ENCODE measurements at regions of chrX and their contacts with region 1.

Region 1: DNA sequence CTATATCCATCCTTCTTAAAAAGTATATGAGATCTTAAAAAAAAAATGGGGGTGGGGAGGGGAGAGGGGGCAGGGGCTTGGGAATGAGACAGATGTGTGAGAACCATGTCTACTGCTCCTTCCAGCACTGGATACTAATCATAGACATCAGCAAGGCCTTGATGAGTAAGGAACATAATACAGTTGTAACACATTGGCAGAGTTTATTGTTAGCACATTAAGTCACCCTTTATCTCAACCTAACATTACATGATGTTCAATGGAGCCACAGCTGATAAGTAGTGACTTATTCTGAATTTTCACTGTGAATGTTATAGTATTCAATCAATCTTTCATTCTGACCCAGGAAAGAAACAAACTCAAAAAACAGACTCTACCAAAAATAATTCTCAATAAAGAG is 47.3 kb upstream of the KCNE5 start:
- DNase-seq: no peak
- ATAC-seq: no peak
- H3K4me3 ChIP-seq: no peak overlapping the region
- H3K27ac ChIP-seq: no peak overlapping the region
- H3K4me1 ChIP-seq: no peaks in the 10 kb centered on the region
- H3K27me3 ChIP-seq: no peaks in the 10 kb centered on the region
- CTCF ChIP-seq: no peak
- POLR2A ChIP-seq: no peak
- RAD21 ChIP-seq: no peak

Region 2: GRCh38 chrX:109660435-109661143 is 11.7 kb before region 1 on chrX:
- CTCF ChIA-PET with region 1: interaction called, 3 read pairs
- POLR2A ChIA-PET with region 1: no interaction called
- dilution Hi-C with region 1: no loop called
- in situ Hi-C with region 1: no loop called
- intact Hi-C with region 1: loop called (anchors 2 kb)
- DNase-seq: peak; percentile 32
- ATAC-seq: peak; percentile 17; the same call in 1 of the 2 replicates
- H3K4me3 ChIP-seq: no peak overlapping the region
- H3K27ac ChIP-seq: no peak overlapping the region
- H3K4me1 ChIP-seq: no peaks in the 10 kb centered on the region
- H3K27me3 ChIP-seq: no peaks in the 10 kb centered on the region
- CTCF ChIP-seq: no peak
- POLR2A ChIP-seq: no peak
- RAD21 ChIP-seq: no peak